HCT116 (cell line): ENCODE measurements at regions of chr9 and their contacts with region 1.

Region 1: GRCh38 chr9:88578121-88579054 is 43.4 kb downstream of the NXNL2 start:
- DNase-seq: peak; percentile 53
- ATAC-seq: peak; percentile 99
- H3K4me3 ChIP-seq: no peak overlapping the region
- H3K27ac ChIP-seq: no peak overlapping the region
- H3K4me1 ChIP-seq: peaks cover 2 to 9% of the 10 kb centered on the region in 2 experiments; a peak in 3 of 4 replicates
- H3K27me3 ChIP-seq: no peaks in the 10 kb centered on the region
- CTCF ChIP-seq: peak; percentile 92 to 99 (median 94)
- POLR2A ChIP-seq: no peak
- RAD21 ChIP-seq: peak; percentile 95

Region 2: GRCh38 chr9:88106491-88106890 is 471.9 kb before region 1 on chr9:
- CTCF ChIA-PET with region 1: no interaction called
- POLR2A ChIA-PET with region 1: no interaction called
- RAD21 ChIA-PET with region 1: no interaction called
- intact Hi-C with region 1: loop called (anchors 2 kb)
- DNase-seq: peak; percentile 54
- ATAC-seq: peak; percentile 99
- H3K4me3 ChIP-seq: no peak overlapping the region
- H3K27ac ChIP-seq: no peak overlapping the region
- H3K4me1 ChIP-seq: no peaks in the 10 kb centered on the region; a peak in 1 of 4 replicates
- H3K27me3 ChIP-seq: no peaks in the 10 kb centered on the region
- CTCF ChIP-seq: peak; percentile 58 to 70 (median 66)
- POLR2A ChIP-seq: no peak
- RAD21 ChIP-seq: peak; percentile 77

Region 3: DNA sequence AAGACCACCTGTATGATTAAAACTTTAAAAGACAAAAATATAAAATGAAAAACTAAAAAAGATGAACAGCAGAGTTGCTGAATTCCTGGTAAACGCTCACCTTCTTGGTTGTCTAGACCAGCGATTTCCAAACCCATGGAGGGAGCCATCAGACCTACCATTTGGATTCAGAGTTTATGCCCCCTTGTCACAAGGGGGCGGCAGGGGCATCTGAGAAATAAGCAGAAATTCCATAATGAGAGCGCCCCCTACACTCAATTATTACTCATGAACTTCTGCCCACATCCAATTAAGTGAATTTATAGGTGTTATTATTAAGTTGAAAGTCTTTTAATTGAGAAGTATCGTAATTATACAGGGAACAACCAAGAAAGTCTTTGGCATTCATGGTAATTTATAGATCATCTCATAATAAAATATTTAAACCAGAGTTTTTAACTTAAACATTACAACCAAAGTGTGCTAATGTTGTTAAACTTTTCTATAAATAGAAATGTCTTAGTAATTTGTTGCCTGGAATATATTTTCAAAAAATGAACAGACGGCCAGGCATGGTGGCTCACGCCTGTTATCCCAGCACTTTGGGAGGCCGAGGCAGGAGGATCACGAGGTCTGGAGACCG is 404.9 kb before region 1 on chr9:
- CTCF ChIA-PET with region 1: no interaction called
- POLR2A ChIA-PET with region 1: no interaction called
- RAD21 ChIA-PET with region 1: no interaction called
- intact Hi-C with region 1: loop called (anchors 1 kb)
- DNase-seq: peak; percentile 81
- ATAC-seq: peak; percentile 91
- H3K4me3 ChIP-seq: no peak overlapping the region
- H3K27ac ChIP-seq: no peak overlapping the region
- H3K4me1 ChIP-seq: no peaks in the 10 kb centered on the region
- H3K27me3 ChIP-seq: no peaks in the 10 kb centered on the region
- CTCF ChIP-seq: peak; percentile 85 to 100 (median 92)
- POLR2A ChIP-seq: no peak
- RAD21 ChIP-seq: peak; percentile 93

Region 4: GRCh38 chr9:88498880-88499279 is 79.5 kb before region 1 on chr9:
- CTCF ChIA-PET with region 1: no interaction called
- POLR2A ChIA-PET with region 1: no interaction called
- RAD21 ChIA-PET with region 1: no interaction called
- intact Hi-C with region 1: loop called (anchors 10 kb)
- DNase-seq: no peak
- ATAC-seq: no peak
- H3K4me3 ChIP-seq: no peak overlapping the region
- H3K27ac ChIP-seq: no peak overlapping the region
- H3K4me1 ChIP-seq: no peaks in the 10 kb centered on the region
- H3K27me3 ChIP-seq: no peaks in the 10 kb centered on the region
- CTCF ChIP-seq: no peak
- POLR2A ChIP-seq: no peak
- RAD21 ChIP-seq: no peak

Region 5: DNA sequence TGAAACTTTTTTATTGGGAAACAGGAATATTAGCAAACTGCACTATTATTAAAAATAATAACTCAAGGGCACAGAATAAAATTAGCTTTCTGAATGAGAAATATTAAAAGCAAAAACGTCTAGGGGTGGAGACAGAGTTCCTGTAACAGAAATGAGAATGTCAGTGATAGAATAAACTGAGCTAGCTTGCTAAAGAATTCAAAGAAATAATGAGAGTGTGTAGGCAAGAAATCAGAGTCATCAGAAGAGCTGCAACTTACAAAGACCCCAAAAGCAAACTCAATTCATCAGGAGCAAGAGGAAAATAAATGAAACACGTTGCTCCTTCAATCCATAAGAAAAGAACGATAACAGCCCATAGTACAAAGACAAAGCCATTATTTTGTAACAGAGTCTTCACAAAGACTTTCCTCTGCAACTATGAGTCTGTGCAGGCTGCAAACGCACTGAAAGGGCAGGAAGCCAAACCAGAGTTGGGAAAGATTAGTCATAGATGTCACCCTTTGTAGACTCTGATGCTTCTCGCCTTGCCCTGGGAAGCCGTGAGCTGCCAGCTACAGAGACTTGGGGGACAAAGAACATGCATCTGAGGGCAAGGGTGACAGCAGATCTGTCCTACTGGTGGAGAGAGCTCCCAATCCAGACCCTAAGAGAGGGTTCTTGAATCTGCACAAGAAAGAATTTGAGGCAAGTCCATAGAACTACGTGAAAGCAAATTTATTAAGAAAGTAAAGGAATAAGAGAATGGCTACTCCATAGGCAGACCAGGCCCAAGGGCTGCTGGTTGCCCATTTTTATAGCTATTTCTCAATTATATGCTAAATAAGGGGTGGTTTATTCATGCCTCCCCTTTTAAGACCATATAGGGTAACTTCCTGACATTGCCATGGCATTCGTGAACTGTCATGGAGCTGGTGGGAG is 559.4 kb after region 1 on chr9:
- CTCF ChIA-PET with region 1: no interaction called
- POLR2A ChIA-PET with region 1: no interaction called
- RAD21 ChIA-PET with region 1: no interaction called
- intact Hi-C with region 1: no loop called
- DNase-seq: peak; percentile 59
- ATAC-seq: peak; percentile 92
- H3K4me3 ChIP-seq: no peak overlapping the region; a peak in 1 of 4 replicates
- H3K27ac ChIP-seq: no peak overlapping the region
- H3K4me1 ChIP-seq: peaks cover 11 to 31% of the 10 kb centered on the region in 2 experiments
- H3K27me3 ChIP-seq: no peaks in the 10 kb centered on the region
- CTCF ChIP-seq: no peak
- POLR2A ChIP-seq: no peak
- RAD21 ChIP-seq: no peak